Ascending aorta (tissue), 2 donors: ENCODE measurements at regions of chr9 and their contacts with region 1.

Region 1: DNA sequence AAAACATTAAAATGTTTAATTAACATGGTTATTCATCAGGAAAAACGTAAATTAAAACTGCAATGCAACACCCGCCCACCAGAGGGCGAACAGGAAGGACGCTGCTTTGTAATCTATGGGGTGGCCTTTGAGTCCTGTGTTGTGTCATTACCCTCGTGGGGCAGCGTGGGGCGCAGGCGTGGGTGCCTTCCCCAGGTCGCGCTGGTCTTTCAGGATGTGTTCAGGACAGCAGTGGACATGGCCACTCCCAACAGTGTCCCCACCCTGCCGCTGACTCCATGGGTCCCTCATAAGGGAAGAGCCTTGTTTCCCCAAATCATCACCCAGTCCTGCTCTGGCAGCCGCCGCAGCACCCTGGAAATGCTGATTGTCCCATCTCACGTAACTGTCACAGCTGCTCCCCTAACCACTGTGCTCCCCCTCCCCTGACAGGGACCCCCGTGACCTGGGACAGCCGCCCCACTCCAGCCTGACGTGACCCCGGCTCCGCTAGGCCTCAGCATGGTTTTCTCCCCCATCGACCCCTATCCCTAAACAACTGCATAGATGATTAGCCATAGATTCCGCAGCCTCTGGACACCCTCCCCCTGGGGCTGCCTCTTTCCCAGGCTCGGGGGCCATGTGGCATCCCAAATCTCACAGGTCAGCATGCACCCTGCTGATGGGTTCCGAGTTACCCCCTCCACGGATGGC is 36.4 kb downstream of the GLT6D1 start:
- DNase-seq: no peak
- H3K4me3 ChIP-seq: no peak overlapping the region
- H3K27ac ChIP-seq: no peak overlapping the region
- H3K4me1 ChIP-seq: no peaks in the 10 kb centered on the region
- H3K27me3 ChIP-seq: no peaks in the 10 kb centered on the region
- CTCF ChIP-seq: peak in 2 of 3 experiments; percentile 56 to 57

Region 2: GRCh38 chr9:135588886-135589595 is 13.9 kb before region 1 on chr9:
- intact Hi-C with region 1: no loop called
- DNase-seq: no peak
- H3K4me3 ChIP-seq: no peak overlapping the region
- H3K27ac ChIP-seq: no peak overlapping the region
- H3K4me1 ChIP-seq: no peaks in the 10 kb centered on the region
- H3K27me3 ChIP-seq: no peaks in the 10 kb centered on the region
- CTCF ChIP-seq: no peak

Region 3: DNA sequence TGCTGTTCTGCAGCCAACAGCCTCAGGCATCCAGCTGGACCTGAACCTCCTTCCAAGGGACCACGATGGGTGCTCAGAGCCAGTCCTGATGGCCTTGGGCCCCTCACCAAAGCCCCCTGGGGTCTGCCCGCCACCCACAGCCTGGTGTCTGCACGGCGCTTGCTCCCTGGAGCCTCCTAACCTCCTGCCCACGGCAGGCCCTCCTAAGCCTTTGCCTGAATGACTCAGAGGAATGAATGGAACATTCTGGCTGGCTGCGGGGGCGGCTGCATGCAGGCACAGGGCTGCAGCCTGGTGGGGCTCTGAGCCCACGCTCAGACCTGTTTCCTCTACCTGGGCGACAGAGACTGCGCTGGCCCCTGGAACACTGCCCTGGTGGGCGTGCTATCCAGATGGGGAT is 89.5 kb after region 1 on chr9:
- intact Hi-C with region 1: no loop called
- DNase-seq: no peak
- H3K4me3 ChIP-seq: no peak overlapping the region
- H3K27ac ChIP-seq: no peak overlapping the region
- H3K4me1 ChIP-seq: no peaks in the 10 kb centered on the region
- H3K27me3 ChIP-seq: no peaks in the 10 kb centered on the region
- CTCF ChIP-seq: no peak

Region 4: DNA sequence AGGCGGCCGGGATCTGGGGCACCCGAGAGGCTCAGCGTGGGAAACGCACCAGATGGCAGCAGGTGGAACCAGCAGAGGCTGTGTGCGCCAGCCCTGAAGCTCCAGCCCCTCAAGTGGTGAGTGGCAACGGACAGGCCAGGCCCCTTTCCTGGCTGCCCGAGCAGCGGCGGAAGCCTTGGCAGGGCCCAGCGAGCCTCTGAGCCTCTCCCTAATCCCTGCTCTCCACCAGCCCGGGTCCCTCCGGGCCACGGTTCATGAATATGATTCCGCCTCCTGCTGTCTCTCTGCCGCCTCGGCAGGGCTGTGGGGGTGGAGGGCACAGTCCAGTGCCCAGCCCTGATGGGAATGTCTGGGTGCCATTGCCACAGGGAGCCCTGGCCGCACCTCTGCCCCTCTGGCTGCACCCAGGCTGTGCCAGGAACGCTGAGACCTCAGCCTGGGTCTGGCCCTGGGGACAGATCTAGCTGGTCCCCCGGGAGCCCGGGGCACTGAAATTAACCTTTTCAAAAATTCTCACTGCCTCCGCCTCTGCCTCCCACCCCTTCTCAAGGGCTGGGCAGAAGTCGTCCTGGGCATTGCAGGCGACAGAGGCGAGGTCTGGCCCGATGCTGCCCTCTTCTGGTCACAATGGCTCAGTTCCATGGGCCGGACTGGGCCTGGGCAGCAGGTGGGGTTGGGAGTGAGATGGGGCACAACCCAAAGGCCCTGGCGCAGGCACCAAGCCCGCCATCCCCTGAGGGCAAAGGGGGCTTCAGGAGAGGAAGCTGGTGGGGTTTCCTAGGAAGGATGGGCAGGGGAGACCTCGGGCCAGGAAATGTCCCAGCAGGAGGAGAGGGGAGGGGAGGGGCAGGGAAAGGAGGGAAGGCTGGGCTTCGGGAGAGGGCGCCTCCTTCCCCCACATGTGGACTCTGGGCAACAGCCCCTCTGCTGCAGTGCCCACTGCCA is 680.6 kb after region 1 on chr9:
- intact Hi-C with region 1: loop called (anchors 10 kb)
- DNase-seq: peak in 1 of 2 donors; percentile 86
- H3K4me3 ChIP-seq: peak overlapping the region; percentile 34 to 59
- H3K27ac ChIP-seq: peak overlapping the region; percentile 51 to 72
- H3K4me1 ChIP-seq: peaks cover 0 to 3% of the 10 kb centered on the region in 2 donors
- H3K27me3 ChIP-seq: no peaks in the 10 kb centered on the region
- CTCF ChIP-seq: peak; percentile 85 to 92 (median 91)